ENCODE measurements at regions of chr18 and their contacts with region 1.

Region 1: GRCh38 chr18:35040988-35041814 is at the start of gene MAPRE2:
- DNase-seq: peak; percentile 99
- H3K4me3 Mint-ChIP-seq: peak within 1 kb of the TSS; percentile 98
- H3K27ac Mint-ChIP-seq: peak within 1 kb of the TSS; percentile 94
- H3K4me1 Mint-ChIP-seq: peaks cover 63% of the 10 kb centered on the region
- H3K27me3 Mint-ChIP-seq: no peaks in the 10 kb centered on the region
- total RNA-seq, gene MAPRE2: 46.4 to 46.5 TPM

Region 2: DNA sequence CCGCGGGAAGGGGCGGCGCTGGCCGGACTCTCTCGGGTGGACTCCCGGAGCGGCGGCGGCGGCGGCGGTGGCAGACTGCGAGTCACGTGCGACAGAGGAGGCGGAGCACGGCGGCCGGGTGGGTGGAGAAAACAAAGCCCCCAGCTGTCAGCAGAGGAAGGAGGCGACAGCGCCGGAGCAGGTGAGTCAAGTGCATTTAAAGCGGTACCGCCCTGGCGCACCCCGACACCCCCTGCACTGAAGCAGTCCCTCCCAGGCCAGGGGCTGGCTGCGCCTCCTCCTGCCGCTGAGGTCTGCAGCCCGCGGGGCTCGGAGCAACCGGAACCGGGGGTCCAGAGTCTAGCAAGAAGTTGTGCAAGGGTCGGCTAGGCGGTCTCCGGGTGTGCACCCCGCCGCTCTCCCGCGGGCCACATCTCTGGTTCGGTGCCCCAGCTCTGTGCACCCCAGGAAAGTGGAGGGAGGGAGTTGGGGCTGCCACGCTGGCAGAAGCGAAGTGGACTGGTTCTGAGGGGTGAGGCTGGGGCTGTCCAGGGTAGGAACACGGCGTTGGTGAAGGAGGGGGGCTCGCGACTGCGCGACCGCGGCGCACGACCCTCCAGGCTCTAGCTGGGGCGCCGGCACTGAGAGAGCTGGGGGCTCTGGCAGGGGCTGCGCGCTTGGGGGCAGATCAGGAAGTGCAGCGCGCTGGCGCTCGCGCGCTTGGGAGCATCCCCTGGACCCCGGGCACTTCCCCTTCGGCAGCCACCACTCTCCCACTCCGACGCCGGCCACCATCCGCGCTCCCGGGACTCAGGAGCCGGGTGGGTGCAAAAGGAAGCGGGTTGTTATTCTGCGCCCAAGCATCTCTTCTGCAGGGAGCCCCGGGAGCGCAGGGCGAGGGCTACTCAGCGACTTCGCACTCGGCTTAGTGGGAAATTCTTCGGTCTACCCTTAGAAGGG is 64.0 kb before region 1 on chr18:
- CTCF ChIA-PET with region 1: no interaction called
- POLR2A ChIA-PET with region 1: interaction called, 7 read pairs
- intact Hi-C with region 1: loop called (anchors 2 kb)
- DNase-seq: peak; percentile 78
- H3K4me3 Mint-ChIP-seq: peak overlapping the region; percentile 72
- H3K27ac Mint-ChIP-seq: no peak overlapping the region
- H3K4me1 Mint-ChIP-seq: peaks cover 23% of the 10 kb centered on the region
- H3K27me3 Mint-ChIP-seq: peaks cover 30% of the 10 kb centered on the region

Region 3: DNA sequence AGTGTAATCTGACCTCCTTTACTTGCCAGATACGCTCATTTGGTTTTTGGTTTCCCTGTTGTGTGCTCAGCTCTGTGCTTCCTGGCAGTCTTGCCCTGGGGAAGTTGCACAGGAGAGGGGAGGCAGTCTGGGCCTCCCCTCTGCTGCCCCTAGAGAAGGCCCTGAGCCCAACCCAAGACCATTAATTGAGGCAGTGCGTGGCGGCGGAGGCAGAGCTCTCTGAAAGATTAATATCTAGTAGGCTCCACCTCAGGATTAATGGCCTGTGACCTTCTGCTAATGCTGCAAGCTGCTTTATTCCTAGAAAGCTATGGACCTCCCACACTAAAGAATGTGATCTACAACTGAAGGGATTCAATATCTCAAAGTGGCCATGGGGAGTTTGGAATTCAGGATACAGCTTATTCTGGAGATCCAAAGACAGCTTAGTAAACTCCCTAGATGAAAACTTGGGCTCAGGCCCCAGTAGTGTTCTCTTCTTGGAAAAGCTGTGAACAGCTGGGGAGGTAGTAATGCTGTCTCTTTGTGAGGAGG is 41.4 kb before region 1 on chr18:
- CTCF ChIA-PET with region 1: no interaction called
- POLR2A ChIA-PET with region 1: no interaction called
- intact Hi-C with region 1: no loop called
- DNase-seq: no peak
- H3K4me3 Mint-ChIP-seq: no peak overlapping the region
- H3K27ac Mint-ChIP-seq: no peak overlapping the region
- H3K4me1 Mint-ChIP-seq: no peaks in the 10 kb centered on the region
- H3K27me3 Mint-ChIP-seq: no peaks in the 10 kb centered on the region

Region 4: GRCh38 chr18:35106845-35107148 is 65.6 kb after region 1 on chr18:
- CTCF ChIA-PET with region 1: no interaction called
- POLR2A ChIA-PET with region 1: no interaction called
- intact Hi-C with region 1: loop called (anchors 2 kb)
- DNase-seq: no peak
- H3K4me3 Mint-ChIP-seq: no peak overlapping the region
- H3K27ac Mint-ChIP-seq: no peak overlapping the region
- H3K4me1 Mint-ChIP-seq: peaks cover 43% of the 10 kb centered on the region
- H3K27me3 Mint-ChIP-seq: no peaks in the 10 kb centered on the region

Region 5: DNA sequence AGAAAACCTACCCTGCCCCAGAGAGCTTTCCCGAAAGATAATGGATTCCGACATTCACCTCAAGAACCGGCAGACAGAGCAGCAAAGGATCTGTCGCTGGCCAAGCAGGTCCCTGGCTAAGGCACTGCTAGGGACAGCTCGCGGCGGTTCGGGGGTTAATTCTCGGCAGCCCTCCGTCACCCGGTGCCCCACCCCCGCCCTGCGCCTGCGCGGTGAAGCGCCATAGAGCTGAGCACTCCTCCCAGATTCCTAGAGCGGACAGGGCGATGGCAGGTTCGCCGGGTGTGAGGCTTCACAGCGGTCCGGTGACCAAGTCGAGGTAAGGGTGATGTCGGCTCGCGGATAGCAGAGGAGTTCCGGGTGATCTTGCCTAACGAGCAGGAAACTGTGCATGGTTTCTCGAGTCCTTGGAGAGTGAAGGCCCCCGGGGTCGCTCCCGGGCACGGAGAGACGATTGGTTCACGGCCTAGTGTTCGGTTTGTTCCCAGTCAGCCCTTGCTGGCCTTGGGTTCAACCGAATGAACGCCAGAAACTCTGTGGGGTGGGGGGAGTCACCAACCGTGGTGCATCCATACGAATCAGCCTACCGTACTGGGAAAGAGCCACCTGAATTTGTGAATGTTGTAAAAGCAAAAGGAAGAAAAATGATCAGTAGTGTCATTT is 249.0 kb after region 1 on chr18 and contains the start of gene ZSCAN30:
- CTCF ChIA-PET with region 1: no interaction called
- POLR2A ChIA-PET with region 1: no interaction called
- intact Hi-C with region 1: loop called (anchors 5 kb)
- DNase-seq: peak; percentile 97
- H3K4me3 Mint-ChIP-seq: peak within 1 kb of the TSS; percentile 98
- H3K27ac Mint-ChIP-seq: peak within 1 kb of the TSS; percentile 93
- H3K4me1 Mint-ChIP-seq: peaks cover 37% of the 10 kb centered on the region
- H3K27me3 Mint-ChIP-seq: no peaks in the 10 kb centered on the region
- total RNA-seq, gene ZSCAN30: 17.9 to 19.6 TPM

Region 6: GRCh38 chr18:35484034-35484433 is 442.8 kb after region 1 on chr18:
- CTCF ChIA-PET with region 1: no interaction called
- POLR2A ChIA-PET with region 1: no interaction called
- intact Hi-C with region 1: loop called (anchors 5 kb)
- DNase-seq: no peak
- H3K4me3 Mint-ChIP-seq: no peak overlapping the region
- H3K27ac Mint-ChIP-seq: no peak overlapping the region
- H3K4me1 Mint-ChIP-seq: peaks cover 42% of the 10 kb centered on the region
- H3K27me3 Mint-ChIP-seq: no peaks in the 10 kb centered on the region

Region 7: GRCh38 chr18:35616664-35617423 is 575.6 kb after region 1 on chr18:
- CTCF ChIA-PET with region 1: no interaction called
- POLR2A ChIA-PET with region 1: no interaction called
- intact Hi-C with region 1: loop called (anchors 10 kb)
- DNase-seq: peak; percentile 81
- H3K4me3 Mint-ChIP-seq: no peak overlapping the region
- H3K27ac Mint-ChIP-seq: no peak overlapping the region
- H3K4me1 Mint-ChIP-seq: peaks cover 7% of the 10 kb centered on the region
- H3K27me3 Mint-ChIP-seq: no peaks in the 10 kb centered on the region